ENCODE measurements at regions of chr7 and their contacts with region 1.

Region 1: DNA sequence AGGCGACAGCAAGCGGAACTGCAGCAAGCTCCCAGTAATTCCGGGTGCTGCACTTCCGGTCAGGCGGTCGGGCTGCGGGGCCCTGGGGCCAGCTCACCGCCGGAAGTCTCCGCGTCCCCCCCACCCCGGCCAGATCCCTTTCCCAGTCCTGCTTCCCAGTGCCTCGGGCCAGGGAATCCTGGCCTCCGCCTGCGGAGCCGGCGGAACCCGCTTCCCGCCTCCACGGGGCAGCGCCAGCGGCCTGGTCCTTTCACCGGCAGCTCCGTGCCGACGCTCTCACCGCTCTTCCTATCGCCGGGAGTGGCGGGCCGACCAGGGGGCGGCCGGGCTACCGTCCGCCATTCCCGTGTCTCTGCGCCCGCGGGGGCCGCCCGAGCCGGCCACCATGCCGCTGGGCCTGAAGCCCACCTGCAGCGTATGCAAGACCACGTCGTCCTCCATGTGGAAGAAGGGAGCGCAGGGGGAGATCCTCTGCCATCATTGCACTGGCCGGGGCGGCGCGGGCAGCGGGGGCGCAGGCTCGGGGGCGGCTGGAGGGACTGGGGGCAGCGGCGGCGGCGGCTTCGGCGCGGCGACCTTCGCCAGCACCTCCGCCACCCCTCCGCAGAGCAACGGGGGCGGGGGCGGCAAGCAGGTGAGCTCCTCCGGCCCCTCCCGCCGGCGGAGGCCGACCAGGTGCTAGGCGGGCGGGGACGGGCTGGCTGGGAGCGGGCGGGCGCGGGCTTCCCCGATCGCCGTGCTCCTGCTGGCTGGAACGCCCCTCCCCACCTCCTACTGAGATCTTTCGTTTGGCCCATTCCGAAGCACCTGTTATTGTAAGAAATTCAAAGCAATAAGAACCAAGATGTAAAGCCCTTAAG is at the start of gene GATAD1:
- DNase-seq: peak; percentile 95
- H3K4me3 Mint-ChIP-seq: peak within 1 kb of the TSS; percentile 94
- H3K27ac Mint-ChIP-seq: peak within 1 kb of the TSS; percentile 93
- H3K4me1 Mint-ChIP-seq: peaks cover 9% of the 10 kb centered on the region
- H3K27me3 Mint-ChIP-seq: peaks cover 2% of the 10 kb centered on the region
- total RNA-seq, gene GATAD1: 21.4 and 22.1 TPM in 2 replicates

Region 2: DNA sequence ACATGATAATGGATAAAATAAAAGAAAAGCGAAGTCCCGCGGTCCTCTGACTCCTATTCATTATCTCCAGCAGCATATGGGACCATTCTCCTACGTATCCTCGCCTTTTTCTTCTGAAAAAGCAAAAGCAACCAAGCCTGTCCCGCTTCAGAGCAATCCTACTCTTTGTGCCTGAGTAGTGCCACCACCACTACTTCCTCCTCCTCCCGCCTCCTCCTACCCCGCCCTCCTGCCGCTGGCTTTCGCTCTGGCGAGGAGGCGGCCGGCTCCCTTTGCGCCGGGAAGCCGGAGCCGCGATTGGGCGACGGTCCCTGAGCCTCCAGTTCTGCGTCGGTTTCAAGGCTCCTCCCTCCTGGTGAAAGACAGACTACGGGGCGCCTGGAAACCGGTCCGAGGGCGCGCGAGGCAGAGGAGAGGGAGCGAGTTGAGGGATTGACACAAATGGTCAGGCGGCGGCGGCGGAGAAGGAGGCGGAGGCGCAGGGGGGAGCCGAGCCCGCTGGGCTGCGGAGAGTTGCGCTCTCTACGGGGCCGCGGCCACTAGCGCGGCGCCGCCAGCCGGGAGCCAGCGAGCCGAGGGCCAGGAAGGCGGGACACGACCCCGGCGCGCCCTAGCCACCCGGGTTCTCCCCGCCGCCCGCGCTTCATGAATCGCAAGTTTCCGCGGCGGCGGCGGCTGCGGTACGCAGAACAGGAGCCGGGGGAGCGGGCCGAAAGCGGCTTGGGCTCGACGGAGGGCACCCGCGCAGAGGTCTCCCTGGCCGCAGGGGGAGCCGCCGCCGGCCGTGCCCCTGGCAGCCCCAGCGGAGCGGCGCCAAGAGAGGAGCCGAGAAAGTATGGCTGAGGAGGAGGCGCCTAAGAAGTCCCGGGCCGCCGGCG is 1183.3 kb before region 1 on chr7 and contains the start of gene FZD1:
- intact Hi-C with region 1: loop called (anchors 10 kb)
- DNase-seq: peak; percentile 92
- H3K4me3 Mint-ChIP-seq: peak within 1 kb of the TSS; percentile 93
- H3K27ac Mint-ChIP-seq: peak within 1 kb of the TSS; percentile 89
- H3K4me1 Mint-ChIP-seq: peaks cover 11% of the 10 kb centered on the region
- H3K27me3 Mint-ChIP-seq: peaks cover 47% of the 10 kb centered on the region
- total RNA-seq, gene FZD1: 0.79 and 0.92 TPM in 2 replicates

Region 3: DNA sequence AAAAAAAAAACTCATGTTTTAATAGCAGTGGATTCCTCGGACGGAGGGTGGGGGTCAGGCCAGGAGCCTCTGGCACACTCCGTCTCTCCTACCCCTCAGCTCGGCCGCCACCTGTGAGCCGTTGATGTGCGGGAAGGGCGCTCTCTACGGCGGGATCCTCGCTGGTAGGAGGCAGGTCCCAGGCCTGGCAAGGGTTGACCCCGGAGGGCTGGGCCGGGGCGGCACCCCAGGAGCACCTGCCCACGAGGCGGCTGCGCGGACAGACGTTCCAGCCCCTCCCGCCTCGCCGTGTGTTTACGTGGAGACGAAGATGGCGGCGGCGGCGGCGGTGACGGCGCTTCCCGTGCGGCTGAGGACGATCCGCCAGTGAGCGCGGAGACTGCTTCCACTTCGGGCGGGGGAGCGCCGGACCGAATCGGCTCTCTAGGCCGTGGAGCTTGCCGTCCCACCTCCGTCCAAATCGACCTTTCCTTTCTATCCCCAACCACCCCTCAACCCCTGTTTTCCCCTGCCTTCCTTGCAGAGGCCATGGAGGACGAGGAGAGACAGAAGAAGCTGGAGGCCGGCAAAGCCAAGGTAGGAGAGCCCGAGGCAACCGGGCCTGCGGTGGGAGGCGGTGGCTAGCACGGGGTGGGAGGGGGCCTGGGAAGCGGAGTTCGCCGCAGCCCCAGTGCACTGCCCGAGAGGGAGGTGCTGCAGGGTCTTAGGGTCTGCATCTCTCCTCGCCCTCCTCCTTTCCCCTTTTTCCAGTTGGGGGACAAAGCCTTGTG is 506.8 kb before region 1 on chr7 and contains the start of gene AKAP9:
- intact Hi-C with region 1: loop called (anchors 5 kb)
- DNase-seq: peak; percentile 97
- H3K4me3 Mint-ChIP-seq: peak within 1 kb of the TSS; percentile 89
- H3K27ac Mint-ChIP-seq: peak within 1 kb of the TSS; percentile 88
- H3K4me1 Mint-ChIP-seq: peaks cover 23% of the 10 kb centered on the region
- H3K27me3 Mint-ChIP-seq: peaks cover 8% of the 10 kb centered on the region
- total RNA-seq, gene AKAP9: 36.0 and 38.2 TPM in 2 replicates

Region 4: GRCh38 chr7:92178927-92179924 is 268.3 kb before region 1 on chr7 and contains the start of gene LRRD1:
- intact Hi-C with region 1: loop called (anchors 1 kb)
- DNase-seq: peak; percentile 97
- H3K4me3 Mint-ChIP-seq: peak within 1 kb of the TSS; percentile 76
- H3K27ac Mint-ChIP-seq: no peak within 1 kb of the TSS
- H3K4me1 Mint-ChIP-seq: peaks cover 1% of the 10 kb centered on the region
- H3K27me3 Mint-ChIP-seq: peaks cover 32% of the 10 kb centered on the region
- total RNA-seq, gene LRRD1: not detected in 2 replicates

Region 5: DNA sequence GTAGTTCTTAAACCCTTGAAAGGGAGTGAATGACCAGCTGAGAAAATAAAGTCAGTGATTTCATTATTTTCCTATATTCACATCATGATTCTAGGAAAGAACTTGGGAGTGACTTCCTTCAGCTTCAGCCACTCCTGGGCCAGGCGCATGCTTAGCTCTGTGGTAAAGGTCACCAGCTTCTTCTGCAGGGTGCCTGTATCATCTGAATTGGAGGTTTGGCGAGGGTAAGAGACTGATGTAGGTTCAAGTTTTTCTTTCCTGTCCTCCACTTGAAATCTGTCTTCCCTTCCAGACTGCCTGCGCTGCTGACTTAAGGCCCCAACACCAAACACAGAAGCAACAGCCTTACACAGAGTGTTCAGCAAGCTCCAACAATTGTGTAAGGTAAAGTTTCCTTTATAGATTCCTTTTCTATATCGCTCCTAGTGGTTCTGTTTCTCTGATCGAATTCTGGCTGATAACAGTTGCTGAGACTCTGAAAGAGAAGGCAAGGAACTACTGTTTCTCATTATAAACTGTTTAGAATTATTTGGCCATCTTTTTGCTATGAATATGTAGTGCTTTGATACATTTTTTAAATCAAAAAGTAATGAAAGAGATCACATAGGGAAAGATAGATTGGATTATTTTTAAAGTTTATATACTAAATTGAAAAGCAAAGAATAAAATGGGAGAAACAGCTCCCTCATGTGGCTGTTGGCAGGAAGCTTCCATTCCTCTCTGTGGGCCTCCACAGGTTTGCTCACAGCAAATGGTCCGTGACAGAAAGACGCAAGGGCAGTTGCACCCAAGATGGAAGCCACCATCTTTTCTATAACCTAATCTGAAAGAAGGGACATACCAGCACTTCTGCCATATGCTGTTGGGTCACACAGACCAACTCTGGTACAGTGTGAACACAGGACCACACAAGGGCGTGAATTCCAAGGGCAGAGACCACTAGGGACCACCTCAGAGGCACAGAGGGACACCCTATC is 13.7 kb after region 1 on chr7:
- intact Hi-C with region 1: loop called (anchors 1 kb)
- DNase-seq: peak; percentile 74
- H3K4me3 Mint-ChIP-seq: no peak overlapping the region
- H3K27ac Mint-ChIP-seq: no peak overlapping the region
- H3K4me1 Mint-ChIP-seq: peaks cover 2% of the 10 kb centered on the region
- H3K27me3 Mint-ChIP-seq: no peaks in the 10 kb centered on the region